CD14-positive monocyte (primary cell): ENCODE measurements at regions of chr3 and their contacts with region 1.

Region 1: DNA sequence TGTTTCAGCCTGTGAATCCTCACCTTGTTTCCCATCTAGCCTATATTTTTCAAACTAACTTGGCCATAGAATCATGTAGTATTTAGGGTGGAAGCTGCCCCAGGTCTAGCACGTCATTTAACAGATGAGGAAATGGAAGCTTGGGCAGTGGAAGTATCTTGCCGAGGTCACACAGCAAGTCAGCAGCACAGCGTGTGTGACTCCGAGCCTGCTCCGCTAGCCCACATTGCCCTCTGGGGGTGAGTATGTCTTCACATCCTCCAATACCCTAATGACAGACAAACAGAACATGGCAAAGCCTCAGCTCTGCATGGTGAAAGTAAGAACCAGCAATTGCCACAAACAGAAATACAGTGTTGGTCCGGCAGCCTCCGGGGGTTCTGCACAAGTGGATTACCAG is 2.2 kb upstream of the CCR5 start:
- DNase-seq: peak; percentile 90 to 94 (median 91)
- H3K4me3 ChIP-seq: peak overlapping the region in 1 of 3 experiments; percentile 19
- H3K4me3 Mint-ChIP-seq: peak overlapping the region in 1 of 2 donors; percentile 46
- H3K27ac ChIP-seq: peak overlapping the region in 1 of 2 donors; percentile 80
- H3K27ac Mint-ChIP-seq: peak overlapping the region; percentile 81 to 92 (median 86)
- H3K4me1 ChIP-seq: peaks cover 48 to 71% of the 10 kb centered on the region in 2 donors
- H3K4me1 Mint-ChIP-seq: peaks cover 66% of the 10 kb centered on the region
- H3K27me3 ChIP-seq: no peaks in the 10 kb centered on the region
- H3K27me3 Mint-ChIP-seq: no peaks in the 10 kb centered on the region
- CTCF ChIP-seq: peak; percentile 71

Region 2: DNA sequence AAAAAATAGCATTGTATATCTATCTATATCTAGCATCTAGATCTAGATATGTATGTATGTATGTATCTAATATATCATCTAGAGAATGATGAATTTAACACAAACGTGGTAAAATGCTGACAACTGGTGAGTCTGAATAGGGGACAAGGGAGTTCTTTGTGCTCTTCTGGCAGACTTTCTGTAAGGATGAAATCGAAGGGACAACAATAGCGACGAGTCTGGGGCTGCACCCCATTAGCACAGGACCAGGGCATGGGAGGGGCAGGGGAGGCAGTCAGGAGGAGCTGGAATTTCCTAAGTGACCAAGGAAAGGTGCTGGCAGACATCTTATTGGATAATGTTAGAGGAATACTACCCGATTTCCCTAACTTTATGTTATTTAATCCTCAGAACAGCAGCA is 168.4 kb before region 1 on chr3:
- intact Hi-C with region 1: loop called in 1 of 2 experiments (anchors 5 kb)
- DNase-seq: no peak
- H3K4me3 ChIP-seq: no peak overlapping the region
- H3K4me3 Mint-ChIP-seq: no peak overlapping the region
- H3K27ac ChIP-seq: peak overlapping the region in 1 of 2 donors; percentile 55
- H3K27ac Mint-ChIP-seq: peak overlapping the region in 4 of 7 donors; percentile 30 to 81 (median 66)
- H3K4me1 ChIP-seq: peaks cover 47 to 49% of the 10 kb centered on the region in 2 donors
- H3K4me1 Mint-ChIP-seq: peaks cover 55% of the 10 kb centered on the region
- H3K27me3 ChIP-seq: no peaks in the 10 kb centered on the region
- H3K27me3 Mint-ChIP-seq: no peaks in the 10 kb centered on the region
- CTCF ChIP-seq: no peak

Region 3: GRCh38 chr3:46214751-46215352 is 153.7 kb before region 1 on chr3:
- intact Hi-C with region 1: loop called in 1 of 2 experiments (anchors 5 kb)
- DNase-seq: peak in 1 of 3 donors; percentile 47
- H3K4me3 ChIP-seq: no peak overlapping the region
- H3K4me3 Mint-ChIP-seq: no peak overlapping the region
- H3K27ac ChIP-seq: no peak overlapping the region
- H3K27ac Mint-ChIP-seq: peak overlapping the region in 2 of 7 donors; percentile 37 to 57
- H3K4me1 ChIP-seq: peaks cover 46 to 47% of the 10 kb centered on the region in 2 donors
- H3K4me1 Mint-ChIP-seq: peaks cover 16% of the 10 kb centered on the region
- H3K27me3 ChIP-seq: no peaks in the 10 kb centered on the region
- H3K27me3 Mint-ChIP-seq: peaks cover 0 to 2% (median 0%) of the 10 kb centered on the region in 3 donors
- CTCF ChIP-seq: peak; percentile 61

Region 4: GRCh38 chr3:46276502-46277099 is 92.0 kb before region 1 on chr3:
- intact Hi-C with region 1: loop called (anchors 5 kb)
- DNase-seq: peak; percentile 67 to 78 (median 74)
- H3K4me3 ChIP-seq: no peak overlapping the region
- H3K4me3 Mint-ChIP-seq: peak overlapping the region in 1 of 2 donors; percentile 75
- H3K27ac ChIP-seq: no peak overlapping the region
- H3K27ac Mint-ChIP-seq: peak overlapping the region in 4 of 7 donors; percentile 3 to 85 (median 51)
- H3K4me1 ChIP-seq: peaks cover 15 to 26% of the 10 kb centered on the region in 2 donors
- H3K4me1 Mint-ChIP-seq: peaks cover 33% of the 10 kb centered on the region
- H3K27me3 ChIP-seq: no peaks in the 10 kb centered on the region
- H3K27me3 Mint-ChIP-seq: peaks cover 0 to 2% (median 0%) of the 10 kb centered on the region in 3 donors
- CTCF ChIP-seq: peak; percentile 93

Region 5: GRCh38 chr3:46406788-46407611 is 38.4 kb after region 1 on chr3 and contains the starts of genes CCR5AS and CCRL2:
- intact Hi-C with region 1: loop called in 1 of 2 experiments (anchors 5 kb)
- DNase-seq: peak; percentile 91 to 98 (median 94)
- H3K4me3 ChIP-seq: peak within 1 kb of the TSS; percentile 34 to 74 (median 55)
- H3K4me3 Mint-ChIP-seq: peak within 1 kb of the TSS; percentile 81 to 95
- H3K27ac ChIP-seq: peak within 1 kb of the TSS; percentile 97 to 100
- H3K27ac Mint-ChIP-seq: peak within 1 kb of the TSS; percentile 100
- H3K4me1 ChIP-seq: peaks cover 43 to 47% of the 10 kb centered on the region in 2 donors
- H3K4me1 Mint-ChIP-seq: peaks cover 58% of the 10 kb centered on the region
- H3K27me3 ChIP-seq: no peaks in the 10 kb centered on the region
- H3K27me3 Mint-ChIP-seq: peaks cover 0 to 7% (median 0%) of the 10 kb centered on the region in 3 donors
- CTCF ChIP-seq: no peak
- polyA plus RNA-seq, gene CCRL2: 10.2 to 15.3 (median 11.7) TPM